CD14-positive monocyte (primary cell): ENCODE measurements at regions of chr3 and their contacts with region 1.

Region 1: DNA sequence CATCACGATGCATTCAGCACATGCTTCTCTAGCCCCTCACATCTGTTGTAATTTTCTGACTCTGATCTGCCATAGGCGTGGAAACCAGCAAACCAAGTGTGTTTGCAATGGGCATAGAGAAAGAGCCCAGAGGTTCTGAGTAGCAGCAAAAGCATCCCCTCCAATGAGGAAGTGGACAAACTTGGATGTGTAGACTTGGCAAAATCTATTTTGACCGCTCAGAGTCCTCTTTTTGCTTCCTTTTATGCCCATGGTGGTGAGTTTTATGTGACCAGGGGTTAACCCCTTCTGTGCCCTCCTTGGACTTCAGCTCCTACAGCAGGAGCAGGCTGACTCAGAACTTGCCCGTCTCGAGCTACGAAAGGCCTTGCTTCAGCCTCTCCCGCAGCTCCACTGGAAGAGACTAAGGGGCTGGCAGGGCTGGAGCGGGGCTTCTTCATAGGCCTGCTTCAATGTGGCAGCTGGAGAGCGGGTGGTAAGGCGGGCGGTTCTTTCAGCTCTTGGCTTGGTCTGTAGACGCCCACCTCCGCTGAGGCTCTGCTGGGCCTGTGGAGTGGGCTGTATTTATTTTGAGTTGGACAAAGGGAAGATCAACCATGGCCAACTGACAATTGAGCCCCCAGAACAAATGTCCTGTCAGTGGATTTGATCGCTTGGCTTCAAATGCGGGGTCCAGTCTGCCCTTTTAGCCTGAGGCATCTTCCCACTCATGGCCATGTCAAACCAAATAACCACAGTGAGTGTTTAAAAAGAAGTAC is 6.5 kb upstream of the ETV5 start:
- DNase-seq: no peak
- H3K4me3 ChIP-seq: no peak overlapping the region
- H3K4me3 Mint-ChIP-seq: peak overlapping the region in 1 of 2 donors; percentile 50
- H3K27ac ChIP-seq: no peak overlapping the region
- H3K27ac Mint-ChIP-seq: peak overlapping the region in 1 of 7 donors; percentile 78
- H3K4me1 ChIP-seq: peaks cover 6 to 9% of the 10 kb centered on the region in 2 donors
- H3K4me1 Mint-ChIP-seq: peaks cover 11% of the 10 kb centered on the region
- H3K27me3 ChIP-seq: peaks cover 33 to 42% of the 10 kb centered on the region in 2 donors
- H3K27me3 Mint-ChIP-seq: peaks cover 51 to 62% (median 59%) of the 10 kb centered on the region in 3 donors
- CTCF ChIP-seq: no peak

Region 2: DNA sequence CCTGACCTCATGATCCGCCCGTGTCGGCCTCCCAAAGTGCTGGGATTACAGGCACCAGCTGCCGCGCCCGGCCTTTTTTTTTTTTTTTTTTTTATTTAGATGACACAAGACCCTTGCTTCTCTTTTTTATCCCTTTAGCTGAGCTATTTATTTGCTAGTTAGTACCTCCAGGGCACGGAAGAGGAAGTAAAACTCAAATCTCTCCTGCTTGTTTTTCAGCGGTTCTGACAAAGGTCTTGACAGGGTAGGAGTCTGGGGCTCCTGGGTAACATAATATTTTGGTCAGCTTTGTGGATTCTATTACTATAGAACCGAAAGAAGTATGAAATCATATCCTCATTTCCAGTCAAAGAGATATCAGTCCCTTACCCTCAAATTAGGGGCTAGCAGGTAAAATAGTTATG is 37.5 kb after region 1 on chr3:
- intact Hi-C with region 1: loop called in 1 of 2 experiments (anchors 5 kb)
- DNase-seq: peak; percentile 77 to 89 (median 82)
- H3K4me3 ChIP-seq: no peak overlapping the region
- H3K4me3 Mint-ChIP-seq: no peak overlapping the region
- H3K27ac ChIP-seq: peak overlapping the region in 1 of 2 donors; percentile 53
- H3K27ac Mint-ChIP-seq: peak overlapping the region; percentile 72 to 89 (median 87)
- H3K4me1 ChIP-seq: peaks cover 39 to 45% of the 10 kb centered on the region in 2 donors
- H3K4me1 Mint-ChIP-seq: peaks cover 45% of the 10 kb centered on the region
- H3K27me3 ChIP-seq: no peaks in the 10 kb centered on the region
- H3K27me3 Mint-ChIP-seq: peaks cover 7 to 21% (median 14%) of the 10 kb centered on the region in 3 donors
- CTCF ChIP-seq: no peak